Activated naive CD8-positive, alpha-beta T cell treated with anti-CD3 and anti-CD28 coated beads, Interleukin-2, amount 10 ng/mL, durations not matched to agents 7 days and 5 days (primary cell): ENCODE measurements at regions of chr11 and their contacts with region 1.

Region 1: DNA sequence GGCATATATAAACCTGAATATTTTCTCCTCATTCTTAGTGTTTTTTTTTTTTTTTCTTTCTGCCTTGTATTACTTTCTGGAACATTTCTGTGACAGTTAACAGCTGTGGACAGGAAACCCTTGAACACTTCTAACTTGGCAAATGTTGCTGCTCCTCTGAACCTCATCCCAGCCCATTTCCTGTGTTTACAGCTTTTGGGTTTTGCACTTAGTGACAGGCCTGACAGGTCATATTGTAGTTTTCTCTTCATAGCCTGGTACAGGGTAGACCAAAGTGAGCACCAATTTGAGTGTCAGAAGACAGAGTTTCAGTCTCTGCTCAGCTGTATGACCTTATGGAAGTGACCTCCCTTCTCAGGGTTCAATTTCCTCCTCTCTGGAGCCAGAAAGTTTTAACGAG is 91.6 kb downstream of the STIM1 start:
- DNase-seq: no peak
- ATAC-seq: peak; percentile 74
- H3K4me3 Mint-ChIP-seq: peak overlapping the region; percentile 75
- H3K27ac Mint-ChIP-seq: peak overlapping the region; percentile 98
- H3K4me1 Mint-ChIP-seq: peaks cover 86% of the 10 kb centered on the region
- H3K27me3 Mint-ChIP-seq: no peaks in the 10 kb centered on the region

Region 2: DNA sequence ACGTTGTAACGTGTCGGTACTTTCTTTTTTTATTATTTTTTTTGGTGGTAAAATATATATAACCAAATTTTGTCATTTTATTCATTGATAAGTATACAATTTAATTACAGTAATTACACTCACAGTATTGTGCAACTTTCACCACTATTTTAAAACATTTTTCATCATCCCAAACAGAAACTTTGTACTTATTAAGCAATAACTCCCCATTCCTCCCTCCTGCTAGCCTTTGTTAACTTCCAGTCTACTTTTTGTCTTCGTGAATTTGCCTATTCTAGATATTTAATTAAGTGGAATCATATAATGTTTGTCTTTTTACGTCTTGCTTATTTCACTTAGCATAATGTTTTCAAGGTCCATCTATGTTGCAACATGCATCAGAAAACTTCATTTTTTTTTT is 33.1 kb before region 1 on chr11:
- POLR2A ChIA-PET with region 1: no interaction called
- DNase-seq: no peak
- ATAC-seq: no peak
- H3K4me3 Mint-ChIP-seq: no peak overlapping the region
- H3K27ac Mint-ChIP-seq: no peak overlapping the region
- H3K4me1 Mint-ChIP-seq: peaks cover 35% of the 10 kb centered on the region
- H3K27me3 Mint-ChIP-seq: no peaks in the 10 kb centered on the region

Region 3: DNA sequence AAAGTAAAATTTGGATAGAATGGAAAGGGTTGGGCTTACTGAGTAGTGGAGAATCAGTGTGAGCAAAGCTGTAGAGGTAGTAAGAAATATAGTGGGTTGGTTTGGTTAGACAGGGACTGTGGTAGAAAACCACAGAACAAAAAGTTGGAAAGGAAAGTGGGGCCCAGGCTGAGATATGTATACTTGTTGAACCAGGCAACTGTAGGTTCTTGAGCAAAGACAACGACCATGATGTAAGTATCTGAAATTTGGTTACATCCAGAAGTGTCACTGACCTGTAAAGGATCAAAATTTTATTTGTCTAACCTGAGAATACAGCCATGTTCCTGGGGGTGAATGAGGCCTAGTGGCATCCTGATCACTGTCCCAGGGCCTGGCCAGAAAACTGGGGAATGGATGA is 22.6 kb after region 1 on chr11:
- POLR2A ChIA-PET with region 1: interaction called, 12 read pairs
- DNase-seq: no peak
- ATAC-seq: peak; percentile 91
- H3K4me3 Mint-ChIP-seq: peak overlapping the region; percentile 59
- H3K27ac Mint-ChIP-seq: peak overlapping the region; percentile 87
- H3K4me1 Mint-ChIP-seq: peaks cover 42% of the 10 kb centered on the region
- H3K27me3 Mint-ChIP-seq: no peaks in the 10 kb centered on the region